ENCODE measurements at regions of chr10 and their contacts with region 1.

Region 1: DNA sequence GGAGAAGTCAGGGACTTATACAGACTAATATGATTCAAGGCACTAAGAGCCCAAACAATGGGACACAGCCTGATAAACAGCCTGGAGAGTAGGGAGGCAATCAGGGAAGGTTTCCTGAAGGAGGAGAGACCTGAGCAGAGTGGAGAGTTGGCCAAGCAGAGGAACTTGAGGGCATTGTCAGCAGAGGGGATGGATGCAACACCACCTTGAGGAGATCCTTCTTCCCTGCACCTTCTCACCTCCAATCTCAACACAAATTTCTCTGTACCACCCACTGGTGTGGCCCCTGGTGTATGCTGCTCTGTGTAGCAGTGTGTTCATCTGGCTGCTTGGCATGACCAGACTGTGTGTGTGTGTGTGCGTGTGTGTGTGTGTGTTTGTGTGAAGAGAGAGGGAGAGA is 146.2 kb downstream of the WDR11 start:
- DNase-seq: no peak

Region 2: GRCh38 chr10:120905268-120905667 is 92.0 kb before region 1 on chr10:
- CTCF ChIA-PET with region 1: no interaction called
- POLR2A ChIA-PET with region 1: no interaction called
- DNase-seq: no peak

Region 3: GRCh38 chr10:120917521-120918250 is 79.6 kb before region 1 on chr10:
- CTCF ChIA-PET with region 1: no interaction called
- POLR2A ChIA-PET with region 1: no interaction called
- DNase-seq: no peak

Region 4: GRCh38 chr10:120948889-120949608 is 48.3 kb before region 1 on chr10:
- CTCF ChIA-PET with region 1: interaction called, 12 read pairs
- POLR2A ChIA-PET with region 1: no interaction called
- DNase-seq: peak; percentile 92